RWPE1 (cell line): ENCODE measurements at regions of chr6 and their contacts with region 1.

Region 1: GRCh38 chr6:142155895-142156757 is 9.1 kb downstream of the VTA1 start:
- DNase-seq: peak; percentile 25
- H3K27ac ChIP-seq: no peak overlapping the region
- CTCF ChIP-seq: peak; percentile 51

Region 2: GRCh38 chr6:142387997-142388815 is 232.1 kb after region 1 on chr6:
- CTCF ChIA-PET with region 1: interaction called, 12 read pairs
- POLR2A ChIA-PET with region 1: no interaction called
- DNase-seq: peak; percentile 44
- H3K27ac ChIP-seq: no peak overlapping the region
- CTCF ChIP-seq: peak; percentile 76